ENCODE measurements at regions of chr3 and their contacts with region 1.

Region 1: DNA sequence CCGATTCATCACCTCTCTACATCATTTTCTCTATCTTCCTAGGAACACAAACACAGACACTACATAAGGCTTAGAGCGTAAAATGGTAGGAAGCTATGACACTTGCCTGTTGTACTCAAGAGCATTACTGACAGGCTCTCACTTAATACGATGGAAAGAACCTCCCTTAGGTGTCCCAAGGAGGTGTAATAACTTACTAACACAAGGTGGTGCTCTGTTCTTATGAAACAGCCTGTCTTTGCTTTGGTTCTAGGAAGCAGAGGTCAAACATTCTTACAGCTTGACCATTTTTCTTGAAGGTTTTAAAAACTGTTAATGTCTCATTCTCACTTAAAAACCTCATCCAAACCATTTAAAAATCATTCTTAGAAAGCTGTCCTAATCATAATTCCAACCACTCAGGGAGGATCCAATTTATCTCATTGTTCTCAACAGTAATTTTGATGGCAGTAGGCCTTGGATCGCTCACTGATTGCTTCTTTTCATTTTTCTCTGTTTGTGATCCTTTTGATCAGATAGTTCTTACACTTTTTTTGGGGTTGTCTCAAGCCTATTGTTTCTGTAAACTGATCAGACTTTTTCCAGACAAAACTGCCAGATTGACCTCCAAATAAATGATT is 317.8 kb upstream of the AGTR1 start:
- DNase-seq: no peak
- ATAC-seq: peak; percentile 74 to 86

Region 2: DNA sequence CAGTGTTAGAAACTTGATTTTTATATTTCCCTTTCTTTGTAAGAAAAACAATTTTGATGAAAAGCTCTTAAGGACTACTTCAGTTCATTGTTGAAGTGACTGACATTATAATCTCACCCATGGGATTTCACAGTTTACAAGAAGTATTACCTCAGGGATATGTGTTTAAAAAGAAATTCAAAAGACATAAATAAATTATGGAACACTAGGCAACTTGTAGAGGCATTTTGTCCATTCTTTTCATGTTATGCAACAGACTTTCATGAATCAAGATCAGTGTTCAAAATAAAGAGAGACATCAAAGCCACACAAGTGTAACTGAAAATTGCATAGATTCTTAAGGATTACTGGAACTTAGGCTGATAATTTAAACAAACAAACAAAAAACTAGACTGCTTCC is 121.0 kb after region 1 on chr3:
- intact Hi-C with region 1: no loop called
- DNase-seq: no peak
- ATAC-seq: no peak

Region 3: DNA sequence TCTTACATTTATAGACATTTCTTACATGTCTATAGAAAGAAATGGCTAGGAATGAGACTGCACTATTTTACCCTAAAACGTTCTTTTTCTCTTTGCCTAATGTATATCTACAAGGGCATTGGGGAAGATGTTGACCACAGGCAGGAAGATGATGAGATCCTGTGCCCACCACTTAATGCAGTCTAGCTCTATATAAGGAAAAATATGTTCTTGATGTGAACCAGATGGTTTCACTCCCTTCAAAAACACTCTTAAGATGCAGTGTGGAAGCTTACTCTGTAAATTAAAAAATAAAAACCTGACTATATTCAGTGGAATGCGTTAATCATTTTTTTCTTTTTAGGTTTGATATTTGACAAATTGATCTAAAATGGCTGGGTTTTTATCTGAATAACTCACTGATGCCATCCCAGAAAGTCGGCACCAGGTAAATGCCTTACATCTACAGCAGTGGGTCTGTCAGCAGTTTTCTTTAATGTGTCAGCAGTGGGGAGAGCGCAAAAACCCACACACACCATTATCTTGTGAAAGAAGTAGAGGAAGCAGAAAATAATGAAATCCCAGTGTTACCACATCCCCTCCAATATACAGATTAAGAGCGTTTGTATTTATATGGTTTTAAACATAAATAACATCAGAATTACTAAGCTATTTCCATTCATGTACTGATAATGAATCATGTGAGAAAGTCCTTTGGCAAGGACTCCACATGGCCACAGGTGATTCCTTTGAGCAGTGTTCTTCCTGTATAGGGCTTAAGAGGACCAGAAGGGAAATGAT is 327.9 kb after region 1 on chr3:
- intact Hi-C with region 1: no loop called
- DNase-seq: no peak
- ATAC-seq: no peak

Region 4: DNA sequence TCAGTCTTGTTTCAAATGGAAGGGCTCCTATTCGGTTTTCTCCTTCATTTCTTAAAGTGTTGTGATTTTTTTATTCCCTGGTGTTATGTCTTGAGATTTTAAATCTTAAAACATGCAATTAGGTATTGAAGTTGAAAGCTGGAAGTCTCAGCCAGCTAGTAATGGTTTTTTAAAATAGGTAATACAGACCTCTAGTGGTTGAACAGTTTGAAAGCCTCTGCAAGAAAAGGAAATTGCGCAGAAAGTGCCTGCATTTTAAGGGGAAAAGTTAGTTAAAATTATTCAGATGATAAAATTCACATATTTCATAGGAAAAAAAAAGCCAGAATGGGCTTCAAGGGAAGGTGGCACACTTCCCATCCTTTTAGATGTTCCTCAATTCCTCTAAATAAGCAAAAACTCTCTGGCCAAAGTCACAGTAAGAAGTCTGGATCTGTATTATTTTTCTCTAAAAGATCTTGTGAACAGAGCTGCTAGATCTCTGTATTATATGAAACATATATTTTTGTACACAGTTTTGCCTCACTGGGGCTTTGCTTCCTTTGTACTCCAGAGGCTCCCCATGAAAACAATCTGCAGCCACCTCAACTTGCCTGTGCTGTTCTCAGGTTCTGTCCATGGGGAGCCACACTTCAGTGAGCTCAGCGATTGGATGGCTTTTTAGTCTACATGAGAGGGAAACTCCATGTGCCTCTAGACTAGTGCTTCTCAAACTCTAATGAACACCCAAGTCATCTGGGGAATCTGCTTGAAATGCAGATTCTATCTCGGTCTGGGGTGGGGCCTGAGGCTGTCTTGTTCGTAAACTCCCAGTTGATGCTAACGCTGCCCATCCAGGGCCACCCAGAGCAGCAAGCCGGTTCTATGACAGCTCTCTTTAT is 339.3 kb after region 1 on chr3:
- intact Hi-C with region 1: loop called in 1 of 2 experiments (anchors 5 kb)
- DNase-seq: no peak
- ATAC-seq: peak in 1 of 2 donors; percentile 38

Region 5: GRCh38 chr3:148943506-148944205 is 563.8 kb after region 1 on chr3:
- intact Hi-C with region 1: loop called (anchors 2 to 5 kb)
- DNase-seq: no peak
- ATAC-seq: peak; percentile 92 to 94

Region 6: GRCh38 chr3:148948913-148949657 is 569.2 kb after region 1 on chr3:
- intact Hi-C with region 1: loop called (anchors 2 to 5 kb)
- DNase-seq: no peak
- ATAC-seq: no peak

Measured in left cardiac atrium (tissue), 4 donors.